H1 (cell line): ENCODE measurements at regions of chr3 and their contacts with region 1.

Region 1: GRCh38 chr3:181230258-181230657 is 240.7 kb upstream of the DNAJC19 start:
- DNase-seq: peak; percentile 27 to 62
- H3K4me3 ChIP-seq: no peak overlapping the region
- H3K27ac ChIP-seq: no peak overlapping the region; the same call in 1 of the 2 replicates
- H3K4me1 ChIP-seq: no peaks in the 10 kb centered on the region
- H3K27me3 ChIP-seq: no peaks in the 10 kb centered on the region
- CTCF ChIP-seq: peak; percentile 42 to 73 (median 52)
- EP300 ChIP-seq: no peak
- POLR2A ChIP-seq: no peak
- RAD21 ChIP-seq: peak; percentile 49 to 50; a peak in 3 of 4 replicates

Region 2: GRCh38 chr3:181173227-181173626 is 57.0 kb before region 1 on chr3:
- CTCF ChIA-PET with region 1: no interaction called
- POLR2A ChIA-PET with region 1: no interaction called
- DNase-seq: no peak
- H3K4me3 ChIP-seq: no peak overlapping the region
- H3K27ac ChIP-seq: no peak overlapping the region
- H3K4me1 ChIP-seq: no peaks in the 10 kb centered on the region; a peak in 1 of 7 replicates
- H3K27me3 ChIP-seq: no peaks in the 10 kb centered on the region
- CTCF ChIP-seq: no peak
- EP300 ChIP-seq: no peak
- POLR2A ChIP-seq: no peak
- RAD21 ChIP-seq: no peak

Region 3: GRCh38 chr3:181210275-181210674 is 20.0 kb before region 1 on chr3:
- CTCF ChIA-PET with region 1: interaction called, 15 read pairs
- POLR2A ChIA-PET with region 1: no interaction called
- DNase-seq: no peak
- H3K4me3 ChIP-seq: no peak overlapping the region
- H3K27ac ChIP-seq: no peak overlapping the region
- H3K4me1 ChIP-seq: no peaks in the 10 kb centered on the region
- H3K27me3 ChIP-seq: no peaks in the 10 kb centered on the region
- CTCF ChIP-seq: peak in 2 of 3 experiments; percentile 14 to 20; a peak in 2 of 4 replicates
- EP300 ChIP-seq: no peak
- POLR2A ChIP-seq: no peak
- RAD21 ChIP-seq: peak; percentile 57 to 62